GM18951 (cell line): ENCODE measurements at regions of chr4 and their contacts with region 1.

Region 1: GRCh38 chr4:179867300-179867878 is 2375.8 kb upstream of the TENM3 start:
- POLR2A ChIP-seq: no peak

Region 2: GRCh38 chr4:180052629-180053028 is 185.2 kb after region 1 on chr4:
- in situ Hi-C with region 1: no loop called
- POLR2A ChIP-seq: no peak

Region 3: GRCh38 chr4:180664766-180665368 is 797.5 kb after region 1 on chr4:
- in situ Hi-C with region 1: loop called (anchors 25 kb)
- POLR2A ChIP-seq: no peak